Calu3 (cell line): ENCODE measurements at regions of chr5 and their contacts with region 1.

Region 1: DNA sequence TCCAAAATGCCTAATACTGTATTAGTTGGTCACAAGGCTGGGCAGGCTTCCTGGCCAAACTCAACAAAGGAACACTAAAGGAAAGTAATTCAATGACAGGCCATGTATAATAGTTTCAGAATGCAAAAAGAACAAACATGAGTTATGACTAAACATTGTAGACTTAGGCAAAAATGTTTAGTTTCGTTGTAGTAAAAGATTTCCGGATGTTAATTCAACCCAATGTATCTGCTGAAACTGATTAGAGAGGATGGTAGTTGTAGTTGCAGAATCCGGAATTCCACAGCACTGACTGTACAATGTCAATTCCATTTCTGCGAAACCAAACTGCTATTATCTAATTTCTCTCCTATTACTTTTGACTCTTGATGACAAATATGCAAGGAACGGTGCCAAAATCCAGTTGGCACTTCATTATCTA is 117.9 kb upstream of the FST start:
- DNase-seq: peak; percentile 60
- H3K4me3 Mint-ChIP-seq: no peak overlapping the region
- H3K27ac Mint-ChIP-seq: peak overlapping the region; percentile 99
- H3K4me1 Mint-ChIP-seq: peaks cover 71% of the 10 kb centered on the region
- H3K27me3 Mint-ChIP-seq: no peaks in the 10 kb centered on the region
- CTCF ChIP-seq: no peak

Region 2: DNA sequence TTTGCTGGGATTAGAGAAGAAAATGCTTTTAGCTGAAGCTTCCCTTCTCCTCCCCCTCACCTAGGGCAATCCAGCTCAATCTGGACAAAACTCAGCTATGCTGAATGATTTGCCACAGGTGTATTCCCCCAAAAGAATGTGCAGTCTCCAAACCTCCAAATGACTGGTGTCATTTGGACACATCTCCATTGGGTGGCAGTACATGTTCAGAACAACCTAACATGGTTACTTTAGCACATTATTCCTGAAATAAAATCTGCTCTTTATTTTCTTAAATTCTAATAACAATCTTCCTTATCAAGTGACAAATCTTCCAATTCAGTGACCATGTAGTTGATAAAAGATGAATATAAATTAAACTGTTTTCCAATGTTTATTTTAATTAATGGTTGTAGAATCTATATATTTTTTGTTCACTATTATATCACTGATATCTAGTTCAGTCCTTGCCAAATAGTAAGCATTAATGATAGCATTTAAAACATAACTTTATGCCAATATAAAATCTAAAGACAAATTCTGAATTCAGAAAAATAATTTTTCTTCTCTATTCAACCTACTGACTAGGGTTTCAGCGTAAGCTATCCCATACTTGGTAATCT is 191.7 kb before region 1 on chr5:
- CTCF ChIA-PET with region 1: no interaction called
- intact Hi-C with region 1: loop called (anchors 10 kb)
- DNase-seq: peak; percentile 35
- H3K4me3 Mint-ChIP-seq: no peak overlapping the region
- H3K27ac Mint-ChIP-seq: no peak overlapping the region
- H3K4me1 Mint-ChIP-seq: no peaks in the 10 kb centered on the region
- H3K27me3 Mint-ChIP-seq: no peaks in the 10 kb centered on the region
- CTCF ChIP-seq: peak; percentile 50

Region 3: GRCh38 chr5:53323943-53324642 is 38.4 kb before region 1 on chr5:
- CTCF ChIA-PET with region 1: no interaction called
- intact Hi-C with region 1: loop called (anchors 5 kb)
- DNase-seq: no peak
- H3K4me3 Mint-ChIP-seq: no peak overlapping the region
- H3K27ac Mint-ChIP-seq: peak overlapping the region; percentile 36
- H3K4me1 Mint-ChIP-seq: peaks cover 19% of the 10 kb centered on the region
- H3K27me3 Mint-ChIP-seq: no peaks in the 10 kb centered on the region
- CTCF ChIP-seq: no peak

Region 4: DNA sequence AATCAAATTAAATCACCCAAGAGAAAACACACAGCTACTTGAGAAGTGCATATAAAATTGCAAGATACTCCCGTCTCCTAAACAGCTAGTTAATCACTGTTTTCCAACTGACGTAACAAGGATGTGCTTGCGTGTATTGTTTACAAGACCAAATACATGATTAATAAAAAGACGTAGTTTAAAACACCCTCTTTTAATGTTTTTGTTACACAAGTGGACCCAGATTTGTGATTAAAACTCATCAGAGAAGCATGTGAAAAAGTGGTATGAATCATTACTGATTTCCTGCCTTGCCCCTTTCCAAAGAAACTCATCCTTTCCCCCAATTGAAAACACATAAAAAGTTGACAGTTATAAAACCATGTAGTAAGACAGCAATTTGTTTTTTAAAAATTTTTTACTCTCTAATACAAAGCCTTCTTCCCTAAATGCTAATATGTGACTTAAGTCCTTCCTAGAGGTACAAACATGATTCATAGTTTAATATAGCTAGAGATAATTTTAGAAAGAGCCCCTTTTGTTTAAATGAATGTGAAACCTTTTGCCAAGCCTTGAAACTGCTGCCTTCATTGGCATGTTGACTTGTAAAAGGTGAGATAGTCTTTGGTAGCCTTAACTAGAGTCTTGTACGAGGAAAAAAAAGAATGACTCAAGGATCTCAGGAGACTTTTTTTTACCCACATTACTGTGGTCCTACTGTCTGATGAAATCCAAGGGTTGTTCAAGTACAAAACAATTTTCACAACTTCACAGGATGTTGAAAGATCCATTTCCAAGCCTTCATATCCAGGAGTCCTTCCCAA is 56.5 kb after region 1 on chr5:
- CTCF ChIA-PET with region 1: interaction called, 4 read pairs
- intact Hi-C with region 1: loop called (anchors 1 kb)
- DNase-seq: no peak
- H3K4me3 Mint-ChIP-seq: no peak overlapping the region
- H3K27ac Mint-ChIP-seq: peak overlapping the region; percentile 95
- H3K4me1 Mint-ChIP-seq: peaks cover 54% of the 10 kb centered on the region
- H3K27me3 Mint-ChIP-seq: no peaks in the 10 kb centered on the region
- CTCF ChIP-seq: no peak

Region 5: DNA sequence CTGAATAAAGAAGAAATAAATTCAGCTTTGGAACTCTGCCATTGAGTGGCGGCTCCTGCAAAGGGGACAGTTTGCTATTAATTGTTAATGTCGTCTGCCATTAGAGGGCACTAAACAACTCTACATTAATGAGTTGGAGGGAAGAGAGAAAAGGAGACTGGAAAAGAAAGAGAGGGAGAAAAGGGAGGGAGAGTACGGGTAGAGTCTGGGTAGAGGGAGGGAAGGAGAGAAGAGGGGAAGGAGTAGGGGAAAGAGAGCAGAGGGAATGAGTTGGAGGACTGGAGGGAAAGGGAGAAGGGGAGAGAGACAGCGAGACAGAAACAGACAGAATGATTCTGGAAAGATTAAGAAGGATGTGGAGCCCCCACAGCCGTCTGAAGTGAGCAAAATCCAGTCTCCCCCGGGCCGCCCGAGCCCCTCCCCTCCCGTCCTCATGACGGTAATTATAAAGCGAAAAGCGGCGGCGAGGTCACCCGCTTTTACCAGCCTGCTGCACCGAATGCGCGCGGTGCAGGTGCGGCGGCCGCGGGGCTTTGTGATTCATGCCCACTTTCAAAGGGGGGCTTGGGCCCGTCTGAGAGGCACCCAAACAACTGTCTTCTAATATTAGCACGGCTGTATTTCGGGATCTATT is 116.0 kb after region 1 on chr5:
- CTCF ChIA-PET with region 1: no interaction called
- intact Hi-C with region 1: loop called (anchors 5 kb)
- DNase-seq: peak; percentile 47
- H3K4me3 Mint-ChIP-seq: peak overlapping the region; percentile 78
- H3K27ac Mint-ChIP-seq: peak overlapping the region; percentile 55
- H3K4me1 Mint-ChIP-seq: peaks cover 15% of the 10 kb centered on the region
- H3K27me3 Mint-ChIP-seq: no peaks in the 10 kb centered on the region
- CTCF ChIP-seq: peak; percentile 60